Right ventricle myocardium superior (tissue), 1 donor: ENCODE measurements at regions of chr11 and their contacts with region 1.

Region 1: DNA sequence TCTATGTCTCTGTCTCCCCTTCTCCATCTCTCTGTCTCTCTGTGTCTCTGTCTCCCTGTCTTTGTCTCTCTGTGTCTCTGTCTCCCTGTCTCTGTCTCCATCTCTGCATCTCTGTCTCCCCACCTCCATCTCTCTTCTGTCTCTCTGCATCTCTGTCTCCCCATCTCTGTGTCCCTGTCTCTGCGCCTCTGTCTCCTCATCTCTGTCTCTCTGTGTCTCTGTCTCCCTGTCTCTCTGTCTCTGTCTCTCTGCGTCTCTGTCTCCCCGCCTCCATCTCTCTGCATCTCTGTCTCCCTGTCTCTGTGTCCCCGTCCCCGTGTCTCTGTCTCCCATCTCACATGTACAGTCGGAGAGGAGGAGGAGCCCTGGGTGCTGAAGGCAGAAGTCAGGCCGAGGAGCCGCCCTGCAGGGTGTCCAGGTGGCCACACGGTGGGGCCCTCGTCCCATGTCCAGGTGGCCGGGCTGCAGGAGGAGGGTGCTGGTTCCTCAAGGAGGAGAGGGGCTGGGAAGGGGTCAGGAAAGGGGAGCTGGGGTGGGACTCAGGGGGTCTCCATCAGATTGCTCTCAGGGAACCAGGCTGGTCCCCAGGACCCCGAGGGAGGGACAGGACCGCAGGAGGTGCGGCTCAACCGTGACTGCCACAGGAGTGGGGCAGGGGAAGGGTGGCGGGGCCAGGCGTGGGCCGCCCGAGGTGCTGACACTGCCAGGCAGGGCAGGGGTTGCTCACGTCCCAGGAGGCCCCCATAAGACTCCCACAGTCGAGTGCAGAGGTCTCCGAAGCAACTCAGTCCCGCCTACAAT is 25.6 kb upstream of the TH start:
- DNase-seq: peak; percentile 81
- ATAC-seq: peak; percentile 88

Region 2: DNA sequence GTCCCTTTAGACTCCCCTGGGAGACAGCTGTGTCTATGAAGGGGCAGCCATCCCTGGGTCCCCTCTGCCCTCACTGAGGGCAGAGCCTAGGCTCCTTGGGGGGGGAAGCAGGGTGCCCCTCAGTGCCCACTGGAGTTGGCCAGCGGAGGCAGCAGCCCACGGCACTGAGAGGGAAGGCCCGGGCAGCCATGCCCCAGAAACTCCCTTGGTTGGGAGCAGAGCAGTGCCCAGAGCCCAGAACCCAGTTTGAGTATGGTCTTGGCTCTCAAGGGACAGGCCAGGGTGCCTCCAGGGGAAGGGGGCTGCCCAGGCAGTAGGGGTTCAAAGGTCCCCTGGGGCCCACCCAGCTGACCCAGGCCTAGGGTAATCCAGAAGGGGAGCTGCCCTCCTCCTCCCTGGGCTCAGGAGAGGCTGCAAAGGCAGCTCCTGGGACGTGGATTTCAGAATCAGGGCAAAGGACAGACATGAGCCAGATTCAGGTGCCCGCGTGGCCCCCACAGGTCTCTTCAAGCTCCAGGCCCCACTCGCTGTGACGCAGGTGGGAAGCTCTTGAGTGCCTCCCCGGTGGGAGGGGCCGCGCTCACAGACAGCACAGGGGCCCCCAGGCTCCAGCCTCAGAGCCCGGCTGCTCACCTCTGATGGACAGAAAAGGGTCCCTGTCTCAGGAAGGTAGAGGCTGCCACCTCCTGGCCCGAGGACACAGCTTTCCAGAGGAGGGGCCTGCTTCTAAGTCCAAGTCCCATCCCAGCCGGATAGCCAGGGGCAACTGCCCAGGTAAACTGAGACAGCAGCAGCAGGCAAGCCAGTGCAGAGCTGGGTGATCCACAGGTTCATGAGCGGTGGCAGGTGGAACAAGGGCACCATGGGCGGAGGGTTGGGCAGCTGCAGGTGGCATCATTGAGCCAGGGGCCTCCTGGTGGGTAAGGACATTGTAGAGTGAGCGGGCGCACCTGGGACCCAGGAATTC is 101.9 kb after region 1 on chr11:
- intact Hi-C with region 1: loop called (anchors 5 kb)
- DNase-seq: peak; percentile 43
- ATAC-seq: no peak

Region 3: DNA sequence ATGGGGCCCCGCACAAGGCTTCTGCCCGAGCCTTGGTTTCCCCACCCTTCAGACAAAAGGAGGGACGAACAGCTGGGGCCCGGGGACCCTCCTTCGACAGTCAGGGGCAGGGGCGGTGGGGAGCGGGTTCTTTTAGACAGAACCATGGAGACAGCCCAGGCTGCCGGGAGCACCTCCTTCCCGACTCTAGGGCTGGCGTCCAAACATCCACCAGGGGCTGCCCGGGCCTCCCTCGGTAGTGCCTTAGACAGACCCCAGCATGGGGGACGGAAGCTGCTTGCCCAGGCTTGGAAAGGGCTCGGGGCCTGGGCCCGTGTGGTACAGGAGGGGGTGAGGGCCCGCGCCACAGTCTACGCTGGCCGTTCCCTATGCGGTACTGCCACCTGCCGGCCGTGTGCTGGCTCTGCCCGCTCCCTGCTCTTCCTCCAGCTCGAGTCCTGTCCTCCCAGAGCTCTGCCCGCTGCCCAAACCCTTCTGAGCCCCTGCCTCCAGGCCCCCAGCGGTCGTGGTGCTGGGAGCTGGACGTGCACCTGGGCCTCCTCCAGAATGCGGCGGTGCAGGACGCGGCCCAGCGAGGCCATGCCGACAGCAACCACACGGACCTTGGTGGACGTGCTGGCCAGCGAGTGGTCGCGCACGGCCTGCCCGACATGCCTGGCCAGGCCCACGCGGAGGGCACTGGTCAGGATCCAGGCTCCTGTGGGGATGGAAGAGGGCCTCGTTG is 223.5 kb after region 1 on chr11:
- intact Hi-C with region 1: loop called (anchors 1 kb)
- DNase-seq: peak; percentile 83
- ATAC-seq: peak; percentile 97